ENCODE measurements at regions of chr4 and their contacts with region 1.

Region 1: DNA sequence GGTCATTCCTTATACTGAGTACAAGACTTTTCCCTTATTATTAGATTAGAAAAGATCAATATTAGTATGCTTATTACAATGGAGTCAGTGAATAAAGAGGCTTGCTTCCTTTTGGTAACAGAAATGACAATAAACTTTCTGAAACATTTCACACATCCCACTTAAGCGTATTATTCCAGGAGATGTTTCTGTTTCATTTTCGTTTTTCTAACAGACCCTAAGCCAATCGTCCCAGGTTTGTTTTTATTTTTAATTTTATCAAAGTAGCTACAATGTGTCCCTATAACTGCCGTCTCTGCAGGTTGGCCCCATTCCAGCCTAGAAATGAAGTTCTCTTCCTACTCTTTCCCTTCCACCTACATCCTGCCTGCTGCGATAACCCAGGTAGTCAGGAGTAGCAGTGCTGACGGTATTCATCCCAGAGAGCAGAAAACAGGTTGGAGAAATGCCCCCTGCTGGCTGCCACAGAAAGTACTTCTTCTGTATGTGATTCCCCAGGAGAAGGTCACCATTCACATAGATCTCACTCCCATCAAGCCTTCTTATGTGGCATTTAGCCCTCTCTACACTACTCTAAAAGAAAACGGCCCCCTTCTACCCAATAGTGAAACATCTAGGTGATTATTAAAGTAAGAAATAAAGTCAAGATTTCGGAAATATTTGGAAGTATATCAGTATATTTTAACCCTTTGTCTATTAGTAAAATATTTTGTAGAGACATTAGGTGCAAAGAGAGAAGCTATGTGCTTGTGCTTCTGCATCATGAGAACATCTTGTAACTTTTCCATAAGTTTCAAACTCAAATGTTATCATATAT is 40.4 kb downstream of the ENPEP start:
- DNase-seq: peak; percentile 77
- H3K4me3 ChIP-seq: peak overlapping the region; percentile 47 to 85 (median 60)
- H3K27ac ChIP-seq: peak overlapping the region; percentile 55
- H3K4me1 ChIP-seq: peaks cover 3% of the 10 kb centered on the region
- H3K27me3 ChIP-seq: no peaks in the 10 kb centered on the region
- CTCF ChIP-seq: peak; percentile 83 to 84

Region 2: GRCh38 chr4:109433205-109434006 is 1082.9 kb before region 1 on chr4 and contains the start of gene SEC24B:
- CTCF ChIA-PET with region 1: no interaction called
- dilution Hi-C with region 1: no loop called
- in situ Hi-C with region 1: loop called in 1 of 2 experiments (anchors 25 kb)
- intact Hi-C with region 1: no loop called
- DNase-seq: peak; percentile 81
- H3K4me3 ChIP-seq: peak within 1 kb of the TSS; percentile 79 to 94 (median 86)
- H3K27ac ChIP-seq: peak within 1 kb of the TSS; percentile 86
- H3K4me1 ChIP-seq: peaks cover 19% of the 10 kb centered on the region
- H3K27me3 ChIP-seq: no peaks in the 10 kb centered on the region
- CTCF ChIP-seq: peak; percentile 53 to 59
- total RNA-seq, gene SEC24B: 22.0 to 34.7 TPM

Region 3: DNA sequence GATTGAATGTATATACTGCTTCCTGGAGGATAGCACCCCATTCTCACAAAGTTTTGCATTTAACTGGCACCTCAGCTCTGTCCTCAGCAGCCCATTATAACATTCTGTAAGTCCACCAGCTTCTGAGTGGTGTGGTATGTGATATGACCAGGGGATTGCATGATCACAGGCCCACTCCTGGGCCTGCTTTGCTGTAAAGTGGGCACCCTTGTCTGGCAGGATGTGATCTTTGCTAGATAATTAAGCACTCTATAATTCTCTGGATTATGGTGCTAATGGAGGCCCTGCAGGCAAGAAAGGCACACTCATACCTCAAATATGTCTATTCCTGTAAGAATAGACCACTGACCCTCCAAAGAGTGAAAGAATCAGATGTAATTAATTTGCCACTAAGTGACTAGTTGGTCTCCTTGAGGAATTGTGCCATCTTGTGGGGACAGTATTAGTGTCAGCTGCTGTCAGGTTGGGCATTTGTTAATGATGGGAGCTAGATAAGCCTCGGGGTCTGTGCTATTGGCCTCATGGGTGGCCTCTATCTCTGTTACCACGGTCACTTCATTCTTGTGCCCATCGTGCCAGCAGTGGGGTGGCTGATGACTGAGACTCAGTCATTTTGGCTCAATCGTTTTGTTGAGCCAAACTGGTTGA is 712.3 kb before region 1 on chr4:
- CTCF ChIA-PET with region 1: no interaction called
- dilution Hi-C with region 1: no loop called
- in situ Hi-C with region 1: no loop called
- intact Hi-C with region 1: loop called (anchors 10 kb)
- DNase-seq: peak; percentile 36
- H3K4me3 ChIP-seq: no peak overlapping the region
- H3K27ac ChIP-seq: no peak overlapping the region
- H3K4me1 ChIP-seq: no peaks in the 10 kb centered on the region
- H3K27me3 ChIP-seq: no peaks in the 10 kb centered on the region
- CTCF ChIP-seq: peak; percentile 49 to 57

Region 4: GRCh38 chr4:110005461-110006056 is 510.8 kb before region 1 on chr4:
- CTCF ChIA-PET with region 1: interaction called, 8 read pairs
- dilution Hi-C with region 1: no loop called
- in situ Hi-C with region 1: loop called (anchors 5 kb)
- intact Hi-C with region 1: loop called (anchors 1 kb)
- DNase-seq: peak; percentile 72
- H3K4me3 ChIP-seq: no peak overlapping the region
- H3K27ac ChIP-seq: no peak overlapping the region
- H3K4me1 ChIP-seq: peaks cover 5% of the 10 kb centered on the region
- H3K27me3 ChIP-seq: no peaks in the 10 kb centered on the region
- CTCF ChIP-seq: peak; percentile 74 to 76

Region 5: GRCh38 chr4:110211007-110211769 is 305.1 kb before region 1 on chr4:
- CTCF ChIA-PET with region 1: interaction called, 5 read pairs
- dilution Hi-C with region 1: no loop called
- in situ Hi-C with region 1: loop called in 1 of 2 experiments (anchors 25 kb)
- intact Hi-C with region 1: no loop called
- DNase-seq: peak; percentile 32
- H3K4me3 ChIP-seq: no peak overlapping the region
- H3K27ac ChIP-seq: no peak overlapping the region
- H3K4me1 ChIP-seq: no peaks in the 10 kb centered on the region
- H3K27me3 ChIP-seq: no peaks in the 10 kb centered on the region
- CTCF ChIP-seq: peak; percentile 81 to 93

Region 6: GRCh38 chr4:110344162-110344561 is 172.2 kb before region 1 on chr4:
- CTCF ChIA-PET with region 1: interaction called, 3 read pairs
- dilution Hi-C with region 1: no loop called
- in situ Hi-C with region 1: no loop called
- intact Hi-C with region 1: loop called (anchors 2 kb)
- DNase-seq: no peak
- H3K4me3 ChIP-seq: no peak overlapping the region
- H3K27ac ChIP-seq: no peak overlapping the region
- H3K4me1 ChIP-seq: no peaks in the 10 kb centered on the region
- H3K27me3 ChIP-seq: peaks cover 1% of the 10 kb centered on the region
- CTCF ChIP-seq: peak in 1 of 2 donors; percentile 27

Region 7: GRCh38 chr4:110663738-110664444 is 147.6 kb after region 1 on chr4:
- CTCF ChIA-PET with region 1: no interaction called
- dilution Hi-C with region 1: no loop called
- in situ Hi-C with region 1: no loop called
- intact Hi-C with region 1: no loop called
- DNase-seq: no peak
- H3K4me3 ChIP-seq: no peak overlapping the region
- H3K27ac ChIP-seq: no peak overlapping the region
- H3K4me1 ChIP-seq: no peaks in the 10 kb centered on the region
- H3K27me3 ChIP-seq: peaks cover 1% of the 10 kb centered on the region
- CTCF ChIP-seq: no peak

Region 8: GRCh38 chr4:111631215-111631999 is 1115.1 kb after region 1 on chr4:
- CTCF ChIA-PET with region 1: no interaction called
- dilution Hi-C with region 1: no loop called
- in situ Hi-C with region 1: no loop called
- intact Hi-C with region 1: loop called (anchors 1 kb)
- DNase-seq: no peak
- H3K4me3 ChIP-seq: no peak overlapping the region
- H3K27ac ChIP-seq: no peak overlapping the region
- H3K4me1 ChIP-seq: peaks cover 4% of the 10 kb centered on the region
- H3K27me3 ChIP-seq: no peaks in the 10 kb centered on the region
- CTCF ChIP-seq: peak; percentile 58 to 62